ENCODE measurements at regions of chr6 and their contacts with region 1.

Region 1: GRCh38 chr6:150093397-150093796 is 24.5 kb upstream of the ULBP3 start:
- DNase-seq: no peak
- H3K27ac ChIP-seq: no peak overlapping the region
- CTCF ChIP-seq: no peak

Region 2: GRCh38 chr6:149941583-149942431 is 151.6 kb before region 1 on chr6 and contains the start of gene ULBP2:
- CTCF ChIA-PET with region 1: interaction called, 13 read pairs
- POLR2A ChIA-PET with region 1: no interaction called
- DNase-seq: peak; percentile 98
- H3K27ac ChIP-seq: peak within 1 kb of the TSS; percentile 88
- CTCF ChIP-seq: no peak